MCF 10A (cell line): ENCODE measurements at regions of chrX and their contacts with region 1.

Region 1: DNA sequence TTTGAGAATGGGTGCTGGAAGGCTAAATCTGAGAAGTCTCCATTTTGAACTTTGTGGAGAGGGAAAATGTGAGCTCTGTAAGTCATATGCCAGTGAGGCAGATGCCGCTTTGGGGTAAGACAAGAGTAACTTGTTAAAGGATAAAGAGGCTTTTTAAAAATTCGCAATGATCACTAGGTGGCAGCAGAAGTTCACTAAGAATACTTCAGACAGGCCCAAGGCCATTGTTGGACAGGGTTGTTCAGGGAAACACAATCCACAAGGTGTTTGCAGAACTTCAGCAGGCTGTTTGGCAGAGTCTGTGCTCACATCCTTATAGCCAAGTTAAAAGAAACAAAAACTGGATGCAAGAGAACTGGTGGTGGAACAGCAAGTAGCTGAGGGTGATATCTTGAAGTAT is 13.7 kb upstream of the PIGA start:
- DNase-seq: peak; percentile 75
- H3K4me3 Mint-ChIP-seq: no peak overlapping the region
- H3K27ac Mint-ChIP-seq: no peak overlapping the region
- H3K4me1 Mint-ChIP-seq: no peaks in the 10 kb centered on the region
- H3K27me3 Mint-ChIP-seq: peaks cover 53% of the 10 kb centered on the region
- CTCF ChIP-seq: peak; percentile 56

Region 2: DNA sequence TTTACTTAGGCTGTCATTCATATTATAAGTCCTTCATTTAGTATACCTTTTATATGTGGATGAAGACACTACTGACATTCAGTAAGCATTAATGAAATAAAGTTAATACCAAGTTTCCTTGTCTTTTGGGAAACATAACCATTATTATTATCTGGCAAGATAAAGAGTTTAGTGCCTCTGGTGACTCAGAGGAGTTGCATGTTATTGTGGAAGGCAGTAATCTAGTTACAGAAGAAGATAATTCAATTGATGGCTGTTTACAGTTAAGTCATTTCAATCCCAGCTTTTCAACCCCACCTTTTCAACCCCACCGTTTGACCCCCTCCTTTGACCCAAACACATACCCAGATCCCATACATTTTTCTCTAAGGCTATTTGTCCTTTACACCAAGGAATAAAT is 620.0 kb before region 1 on chrX:
- CTCF ChIA-PET with region 1: no interaction called
- POLR2A ChIA-PET with region 1: no interaction called
- intact Hi-C with region 1: no loop called
- DNase-seq: no peak
- H3K4me3 Mint-ChIP-seq: no peak overlapping the region
- H3K27ac Mint-ChIP-seq: no peak overlapping the region
- H3K4me1 Mint-ChIP-seq: no peaks in the 10 kb centered on the region
- H3K27me3 Mint-ChIP-seq: no peaks in the 10 kb centered on the region
- CTCF ChIP-seq: no peak

Region 3: DNA sequence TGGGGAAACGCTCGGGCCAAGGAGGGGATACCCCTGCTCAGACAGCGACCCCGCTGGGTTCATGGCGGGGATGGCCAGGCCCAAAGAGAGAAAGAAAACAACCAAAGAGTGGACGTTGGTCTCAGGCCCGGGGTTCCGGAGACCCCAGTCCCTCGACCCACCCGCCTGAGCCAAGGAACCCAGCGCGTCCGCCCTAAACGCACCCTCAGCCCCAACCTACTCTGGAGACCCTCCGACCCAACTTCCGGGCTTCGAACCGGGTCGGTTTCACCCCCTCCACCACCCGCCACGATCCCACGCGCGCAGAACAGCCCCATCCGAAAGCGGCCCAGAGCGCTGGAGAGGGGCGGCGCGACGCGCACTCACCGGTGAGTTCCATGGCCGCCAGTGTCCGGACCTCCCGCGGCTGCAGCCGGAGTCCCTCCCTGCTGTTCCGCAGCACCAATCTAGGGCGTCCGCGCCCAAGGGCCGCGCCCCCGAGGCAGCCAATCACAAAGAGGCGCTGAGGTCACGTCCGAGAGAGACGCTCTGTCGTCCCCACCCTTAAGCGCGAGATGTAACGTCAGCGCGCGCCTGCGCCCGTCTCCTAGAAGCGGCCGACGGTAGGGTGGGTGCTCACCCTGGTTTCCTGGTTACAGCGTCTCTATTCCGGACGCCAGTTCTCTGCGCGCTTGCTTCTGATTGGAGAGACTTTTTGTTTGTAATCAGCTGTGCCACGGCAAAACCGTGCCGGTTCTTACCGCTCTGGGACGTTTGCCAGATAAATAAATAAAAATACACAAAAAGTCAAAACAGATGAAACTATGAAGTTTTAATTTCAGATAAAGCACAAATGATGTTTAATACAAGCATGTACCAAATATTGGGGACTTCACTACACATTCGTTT is 13.7 kb before region 1 on chrX and contains the start of gene PIGA:
- CTCF ChIA-PET with region 1: interaction called, 28 read pairs
- POLR2A ChIA-PET with region 1: interaction called, 3 read pairs
- intact Hi-C with region 1: no loop called
- DNase-seq: peak; percentile 94
- H3K4me3 Mint-ChIP-seq: peak within 1 kb of the TSS; percentile 80
- H3K27ac Mint-ChIP-seq: peak within 1 kb of the TSS; percentile 88
- H3K4me1 Mint-ChIP-seq: peaks cover 5% of the 10 kb centered on the region
- H3K27me3 Mint-ChIP-seq: peaks cover 45% of the 10 kb centered on the region
- CTCF ChIP-seq: no peak
- total RNA-seq, gene PIGA: 17.3 and 22.7 TPM in 2 replicates

Region 4: DNA sequence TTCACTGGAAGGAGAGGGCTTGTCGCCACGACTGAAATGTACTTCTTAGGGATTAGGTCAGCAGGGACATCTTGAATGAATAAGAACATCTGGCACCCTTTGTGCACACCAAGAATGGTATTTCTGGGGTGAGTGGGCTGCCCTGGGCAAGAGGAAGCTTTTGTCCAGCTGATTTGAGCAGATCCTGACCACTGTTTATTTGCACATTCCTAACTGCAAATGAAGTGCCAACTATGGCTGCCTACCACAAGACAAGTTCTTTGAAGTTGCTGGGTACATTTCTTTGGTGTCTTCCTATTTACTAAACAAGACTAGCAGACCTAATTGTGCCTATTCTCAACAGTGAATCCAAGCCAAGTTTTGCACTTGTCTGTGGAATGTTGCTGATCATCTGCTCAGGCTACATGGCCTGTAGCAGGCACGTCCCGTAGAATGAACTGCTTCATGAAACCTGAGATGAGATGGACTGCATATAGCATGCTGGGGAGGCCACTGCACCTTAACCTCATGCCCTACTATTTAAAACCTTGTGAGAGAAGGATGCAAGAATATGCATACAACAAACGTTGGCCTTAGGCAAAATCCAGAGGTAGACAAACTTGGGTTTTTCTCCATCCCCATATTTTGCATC is 99.1 kb after region 1 on chrX:
- CTCF ChIA-PET with region 1: interaction called, 38 read pairs
- POLR2A ChIA-PET with region 1: no interaction called
- intact Hi-C with region 1: no loop called
- DNase-seq: no peak
- H3K4me3 Mint-ChIP-seq: no peak overlapping the region
- H3K27ac Mint-ChIP-seq: no peak overlapping the region
- H3K4me1 Mint-ChIP-seq: no peaks in the 10 kb centered on the region
- H3K27me3 Mint-ChIP-seq: peaks cover 12% of the 10 kb centered on the region
- CTCF ChIP-seq: no peak

Region 5: GRCh38 chrX:15493118-15493962 is 144.3 kb after region 1 on chrX and contains the start of gene PIR:
- CTCF ChIA-PET with region 1: interaction called, 26 read pairs
- POLR2A ChIA-PET with region 1: interaction called, 4 read pairs
- intact Hi-C with region 1: no loop called
- DNase-seq: peak; percentile 96
- H3K4me3 Mint-ChIP-seq: peak within 1 kb of the TSS; percentile 76
- H3K27ac Mint-ChIP-seq: peak within 1 kb of the TSS; percentile 88
- H3K4me1 Mint-ChIP-seq: peaks cover 8% of the 10 kb centered on the region
- H3K27me3 Mint-ChIP-seq: no peaks in the 10 kb centered on the region
- CTCF ChIP-seq: peak; percentile 34
- total RNA-seq, gene PIR: 8.2 and 10.3 TPM in 2 replicates